Right ventricle myocardium inferior (tissue), 1 donor: ENCODE measurements at regions of chr13 and their contacts with region 1.

Region 1: DNA sequence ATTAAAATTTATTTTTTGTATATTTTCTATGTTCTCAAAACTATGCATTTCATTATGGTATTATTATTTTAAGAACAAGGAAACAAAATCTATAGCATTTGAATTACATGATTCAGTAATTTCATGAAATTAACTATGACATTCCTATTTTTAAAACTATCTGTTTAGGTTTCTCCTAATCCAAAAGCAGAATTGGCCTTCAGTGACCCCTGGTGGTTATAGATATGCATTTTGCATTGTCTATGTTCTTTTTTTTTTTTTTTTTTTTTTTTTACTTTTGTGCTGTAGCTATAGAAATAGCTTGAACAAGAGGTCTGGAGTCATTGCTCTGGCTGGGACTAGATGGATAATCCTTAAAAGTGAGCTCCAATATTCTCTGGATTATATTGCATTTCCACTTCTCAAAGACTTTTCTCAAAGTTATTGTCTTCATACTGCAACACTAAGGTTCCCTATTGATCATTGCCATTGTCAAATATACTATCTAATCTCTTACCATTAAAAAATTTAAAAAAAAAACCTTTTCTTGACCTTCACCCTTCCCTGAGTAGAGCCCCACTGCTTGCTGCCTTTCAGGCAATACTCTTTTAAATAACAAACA is 15.9 kb upstream of the DNAJC3 start:
- DNase-seq: no peak
- ATAC-seq: no peak

Region 2: GRCh38 chr13:95536632-95537241 is 124.3 kb before region 1 on chr13:
- intact Hi-C with region 1: loop called (anchors 5 kb)
- DNase-seq: no peak
- ATAC-seq: no peak

Region 3: DNA sequence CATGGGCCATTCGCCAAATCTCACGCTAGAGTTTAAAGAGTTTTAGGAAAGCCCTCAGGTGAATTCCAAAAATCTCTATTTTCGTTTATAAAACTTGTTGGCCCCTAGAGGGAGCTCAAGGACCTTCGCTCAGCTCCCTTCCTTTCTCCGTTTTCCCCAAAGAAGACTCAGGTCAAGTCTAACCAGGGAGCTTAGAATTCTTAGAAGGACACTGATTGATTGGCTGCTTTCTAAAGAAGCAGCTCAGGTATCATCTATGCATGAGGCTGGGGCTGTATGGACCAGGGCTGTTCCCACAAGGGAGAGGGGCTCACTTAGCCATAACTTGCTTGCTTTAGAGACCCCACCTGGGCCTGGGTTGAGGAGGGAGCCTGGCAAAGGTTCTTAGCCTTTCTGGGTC is 37.1 kb before region 1 on chr13:
- intact Hi-C with region 1: loop called (anchors 5 kb)
- DNase-seq: no peak
- ATAC-seq: peak; percentile 60